Left ventricle myocardium inferior (tissue), 1 donor: ENCODE measurements at regions of chr1 and their contacts with region 1.

Region 1: DNA sequence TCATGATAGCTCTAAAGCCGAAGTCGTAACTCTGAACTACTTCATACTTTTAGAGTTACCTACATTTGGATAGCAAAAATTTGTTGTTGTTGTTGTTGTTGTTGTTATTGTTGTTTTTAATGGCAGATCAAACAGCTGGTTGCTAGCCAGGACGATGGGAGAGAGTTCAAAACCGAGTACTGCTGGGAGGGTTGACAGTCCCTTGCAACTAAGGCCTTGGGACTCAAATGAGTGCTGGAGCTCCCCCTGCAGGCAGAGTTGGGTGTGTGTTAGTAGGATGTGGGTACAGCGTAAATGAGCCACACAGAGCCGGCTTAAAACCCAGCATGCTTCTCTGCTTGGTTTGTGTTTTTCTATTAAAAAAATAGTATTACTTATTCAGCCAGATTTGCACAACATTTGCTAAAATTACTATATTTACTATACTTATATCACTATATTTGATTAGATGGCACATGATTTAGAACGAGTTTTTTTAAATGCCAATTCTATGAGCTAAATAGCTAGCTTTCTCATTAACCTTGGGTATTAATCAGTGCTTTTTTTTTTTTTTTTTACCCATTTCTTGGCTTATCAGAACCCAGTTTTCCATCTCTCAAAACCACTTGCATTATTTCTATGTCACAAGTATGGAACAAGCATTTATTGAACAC is 129.2 kb upstream of the SYT6 start:
- DNase-seq: peak; percentile 86
- H3K4me3 ChIP-seq: no peak overlapping the region
- H3K27ac ChIP-seq: no peak overlapping the region
- H3K4me1 ChIP-seq: no peaks in the 10 kb centered on the region
- H3K27me3 ChIP-seq: peaks cover 2% of the 10 kb centered on the region
- CTCF ChIP-seq: peak; percentile 93

Region 2: GRCh38 chr1:113978863-113979702 is 303.8 kb before region 1 on chr1 and contains the start of gene OLFML3:
- intact Hi-C with region 1: loop called (anchors 5 kb)
- DNase-seq: peak; percentile 80
- H3K4me3 ChIP-seq: peak within 1 kb of the TSS; percentile 50
- H3K27ac ChIP-seq: peak within 1 kb of the TSS; percentile 76
- H3K4me1 ChIP-seq: peaks cover 59% of the 10 kb centered on the region
- H3K27me3 ChIP-seq: no peaks in the 10 kb centered on the region
- CTCF ChIP-seq: peak; percentile 77
- total RNA-seq, gene OLFML3: 14.3 TPM

Region 3: GRCh38 chr1:114192329-114192728 is 90.5 kb before region 1 on chr1:
- intact Hi-C with region 1: no loop called
- DNase-seq: no peak
- H3K4me3 ChIP-seq: no peak overlapping the region
- H3K27ac ChIP-seq: no peak overlapping the region
- H3K4me1 ChIP-seq: no peaks in the 10 kb centered on the region
- H3K27me3 ChIP-seq: peaks cover 49% of the 10 kb centered on the region
- CTCF ChIP-seq: no peak